Aorta (tissue), 5 donors: ENCODE measurements at regions of chr7 and their contacts with region 1.

Region 1: DNA sequence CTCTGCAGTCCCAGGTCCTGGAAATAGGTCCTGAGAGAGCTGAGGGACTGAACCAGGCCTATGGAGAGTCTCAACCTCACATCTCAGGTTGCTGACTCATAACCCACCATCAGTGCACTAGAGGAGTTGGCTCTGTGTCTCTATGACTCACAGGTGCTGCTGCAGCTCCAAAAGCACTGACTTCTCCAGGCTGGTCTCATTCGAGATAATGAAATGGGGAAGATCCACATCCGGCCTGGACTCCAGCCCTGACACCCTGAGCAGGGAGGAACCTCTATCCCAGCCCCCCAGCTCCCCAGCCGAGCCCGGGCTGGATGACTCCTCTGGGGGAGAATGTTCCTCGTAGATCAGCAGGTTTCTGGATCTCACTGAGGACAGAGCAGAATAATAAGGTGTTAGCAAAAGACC is 35.5 kb upstream of the DGKI start:
- DNase-seq: peak in 1 of 2 donors; percentile 70
- ATAC-seq: no peak
- H3K4me3 ChIP-seq: no peak overlapping the region
- H3K27ac ChIP-seq: peak overlapping the region in 1 of 2 donors; percentile 56
- H3K4me1 ChIP-seq: peaks cover 3 to 11% of the 10 kb centered on the region in 2 donors
- H3K27me3 ChIP-seq: no peaks in the 10 kb centered on the region

Region 2: GRCh38 chr7:137667633-137668387 is 214.5 kb before region 1 on chr7:
- intact Hi-C with region 1: loop called in 1 of 2 experiments (anchors 5 kb)
- DNase-seq: no peak
- ATAC-seq: no peak
- H3K4me3 ChIP-seq: no peak overlapping the region
- H3K27ac ChIP-seq: no peak overlapping the region
- H3K4me1 ChIP-seq: no peaks in the 10 kb centered on the region
- H3K27me3 ChIP-seq: no peaks in the 10 kb centered on the region

Region 3: DNA sequence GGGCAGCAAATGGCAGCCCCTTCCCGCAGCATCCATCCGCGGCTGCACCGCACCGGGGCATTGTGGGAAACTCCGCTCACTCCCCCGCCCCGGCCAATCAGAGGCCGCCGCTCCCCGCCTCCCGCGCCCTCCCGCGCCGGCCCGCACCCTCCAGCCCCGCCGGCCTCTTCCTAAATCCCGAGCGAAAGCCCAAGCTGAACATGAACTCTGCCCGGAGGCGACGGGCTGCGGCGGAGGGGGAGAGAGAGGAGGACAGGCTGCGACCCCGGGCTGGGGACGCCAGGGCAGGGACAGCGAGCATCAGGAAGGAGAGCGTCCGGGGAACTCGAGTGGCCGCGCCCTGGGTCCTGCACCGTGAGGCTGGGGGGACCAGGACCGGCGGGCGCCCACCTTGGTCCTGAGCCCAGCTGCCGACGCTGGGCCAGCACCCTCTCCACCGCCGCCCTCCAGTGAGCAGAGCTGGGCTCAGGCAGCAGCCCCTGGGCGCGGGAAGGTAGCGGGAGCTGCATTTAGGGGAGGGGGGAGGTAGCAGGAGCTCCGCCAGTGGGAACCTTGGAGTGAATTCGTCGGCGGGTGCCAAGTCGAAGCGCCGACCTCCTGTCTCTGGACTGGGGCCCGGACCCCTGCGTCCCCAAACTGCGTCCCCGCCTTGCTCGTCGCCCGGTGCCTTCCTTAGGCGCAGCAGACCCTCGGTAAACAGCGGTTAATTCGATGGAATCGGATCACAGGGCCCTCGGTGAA is 35.3 kb before region 1 on chr7 and contains the start of gene DGKI:
- intact Hi-C with region 1: loop called in 1 of 2 experiments (anchors 1 kb)
- DNase-seq: peak; percentile 57 to 79
- ATAC-seq: peak; percentile 72
- H3K4me3 ChIP-seq: peak within 1 kb of the TSS; percentile 45 to 55
- H3K27ac ChIP-seq: peak within 1 kb of the TSS in 1 of 2 donors; percentile 0
- H3K4me1 ChIP-seq: no peaks in the 10 kb centered on the region
- H3K27me3 ChIP-seq: no peaks in the 10 kb centered on the region
- total RNA-seq, gene DGKI: 6.8 to 11.3 TPM